Aorta (tissue), 5 donors: ENCODE measurements at regions of chr15 and their contacts with region 1.

Region 1: DNA sequence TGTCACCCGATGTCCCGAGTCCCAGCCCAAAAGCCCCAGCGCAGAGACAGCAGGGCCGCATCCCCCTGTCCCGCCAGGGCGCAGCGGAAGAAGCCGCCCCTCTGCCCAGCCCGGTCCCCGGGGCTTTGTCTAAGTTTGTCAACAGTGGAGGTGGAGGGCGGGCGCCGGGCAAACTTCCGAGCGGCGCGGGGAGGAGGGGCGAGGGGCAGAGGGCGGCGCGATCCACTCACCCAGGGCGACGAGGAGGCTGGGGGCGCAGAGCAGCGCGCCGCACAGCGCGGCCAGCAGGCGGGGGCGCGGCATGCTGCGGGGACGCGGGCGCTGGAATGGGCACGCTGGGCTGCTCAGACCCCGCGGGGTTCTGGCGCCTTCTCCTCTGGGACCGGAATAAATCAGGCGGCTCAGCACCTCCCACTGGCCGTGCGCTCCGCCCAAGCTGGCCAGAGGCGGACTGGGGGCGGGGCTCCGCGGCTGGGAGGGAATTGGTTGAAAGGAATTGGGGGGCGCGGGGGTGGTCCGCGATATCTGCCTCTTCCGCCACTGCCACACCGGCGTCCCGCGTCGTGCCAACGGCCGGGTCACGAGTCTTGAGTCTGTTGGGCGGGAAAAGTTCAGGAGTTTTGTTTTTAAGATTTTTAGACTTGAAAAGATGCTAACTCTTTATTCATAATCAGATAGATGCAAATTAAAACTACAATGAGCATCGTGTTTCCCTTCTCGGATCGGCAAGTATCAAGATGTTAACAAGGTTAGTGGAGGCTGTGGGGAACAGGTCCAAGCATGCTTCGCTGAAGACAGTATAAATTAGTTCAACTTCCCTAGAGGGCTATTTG is at the start of gene MFGE8:
- DNase-seq: peak; percentile 86 to 94
- ATAC-seq: peak; percentile 87
- H3K4me3 ChIP-seq: peak within 1 kb of the TSS; percentile 81 to 86
- H3K27ac ChIP-seq: peak within 1 kb of the TSS; percentile 80 to 93
- H3K4me1 ChIP-seq: no peaks in the 10 kb centered on the region
- H3K27me3 ChIP-seq: no peaks in the 10 kb centered on the region
- total RNA-seq, gene MFGE8: 1,647 to 2,143 TPM

Region 2: GRCh38 chr15:89075846-89076245 is 162.6 kb after region 1 on chr15:
- intact Hi-C with region 1: no loop called
- DNase-seq: no peak
- ATAC-seq: no peak
- H3K4me3 ChIP-seq: no peak overlapping the region
- H3K27ac ChIP-seq: no peak overlapping the region
- H3K4me1 ChIP-seq: no peaks in the 10 kb centered on the region
- H3K27me3 ChIP-seq: no peaks in the 10 kb centered on the region

Region 3: GRCh38 chr15:89171136-89172072 is 258.2 kb after region 1 on chr15:
- intact Hi-C with region 1: loop called in 1 of 2 experiments (anchors 5 kb)
- DNase-seq: no peak
- ATAC-seq: peak; percentile 51
- H3K4me3 ChIP-seq: no peak overlapping the region
- H3K27ac ChIP-seq: no peak overlapping the region
- H3K4me1 ChIP-seq: peaks cover 0 to 14% of the 10 kb centered on the region in 2 donors
- H3K27me3 ChIP-seq: no peaks in the 10 kb centered on the region